ENCODE measurements at regions of chr5 and their contacts with region 1.

Region 1: DNA sequence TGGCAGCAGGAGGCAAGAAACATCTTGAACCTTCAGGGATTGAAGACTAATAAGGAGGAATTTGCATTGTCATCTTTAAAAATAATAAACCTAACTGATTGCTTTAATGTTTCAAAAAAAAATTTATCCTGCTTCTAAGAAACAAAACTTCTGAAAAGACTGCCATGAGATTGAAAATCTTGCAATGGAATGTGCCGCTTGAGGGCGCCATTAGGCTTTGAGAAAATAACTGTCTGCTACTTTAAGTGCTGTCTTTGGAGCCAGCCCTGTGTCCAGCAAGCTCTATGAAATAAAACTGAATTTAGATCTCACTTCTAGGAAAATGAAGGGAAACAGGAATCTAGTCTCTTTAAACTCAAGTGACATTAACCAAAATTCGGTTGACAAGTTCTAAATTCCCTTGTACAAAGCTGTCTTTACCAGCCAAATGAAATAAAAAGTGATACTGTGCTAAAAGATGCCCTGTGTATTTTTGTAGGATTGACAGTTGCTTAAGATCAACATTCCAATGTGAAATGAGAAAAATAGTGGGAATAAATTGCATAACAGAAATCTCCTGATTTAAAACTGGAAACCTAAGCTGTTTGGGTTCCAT is 79.4 kb downstream of the ESM1 start:
- DNase-seq: peak; percentile 79
- H3K4me3 Mint-ChIP-seq: no peak overlapping the region
- H3K27ac Mint-ChIP-seq: no peak overlapping the region
- H3K4me1 Mint-ChIP-seq: peaks cover 16% of the 10 kb centered on the region
- H3K27me3 Mint-ChIP-seq: peaks cover 39% of the 10 kb centered on the region

Region 2: GRCh38 chr5:54719384-54720283 is 186.4 kb before region 1 on chr5:
- CTCF ChIA-PET with region 1: no interaction called
- POLR2A ChIA-PET with region 1: no interaction called
- intact Hi-C with region 1: loop called (anchors 1 kb)
- DNase-seq: peak; percentile 67
- H3K4me3 Mint-ChIP-seq: no peak overlapping the region
- H3K27ac Mint-ChIP-seq: peak overlapping the region; percentile 42
- H3K4me1 Mint-ChIP-seq: peaks cover 34% of the 10 kb centered on the region
- H3K27me3 Mint-ChIP-seq: peaks cover under 1% of the 10 kb centered on the region

Region 3: DNA sequence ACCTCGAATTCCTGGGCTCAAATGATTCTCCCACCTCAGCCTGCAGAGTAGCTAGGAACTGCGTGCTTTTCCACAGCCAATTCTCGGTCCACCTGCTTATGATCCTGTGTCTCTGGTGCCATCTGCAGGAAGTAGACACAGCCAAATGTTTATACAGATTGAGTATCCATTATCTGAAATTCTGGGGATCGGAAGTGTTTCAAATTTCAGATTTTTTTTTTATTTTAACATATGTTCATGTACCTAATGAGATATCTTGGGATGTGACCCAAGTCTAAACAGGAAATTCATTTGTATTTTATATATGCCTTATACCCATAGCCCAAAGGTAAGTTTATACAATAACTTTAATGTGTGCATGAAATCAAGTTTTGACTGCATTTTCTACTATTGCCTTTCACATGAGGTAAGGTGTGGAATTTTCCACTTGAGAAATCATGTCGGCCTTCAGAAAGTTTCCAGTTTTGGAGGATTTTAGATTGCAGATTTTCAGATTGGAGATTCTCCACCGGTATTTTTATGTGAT is 10.2 kb before region 1 on chr5:
- CTCF ChIA-PET with region 1: interaction called, 13 read pairs
- POLR2A ChIA-PET with region 1: no interaction called
- intact Hi-C with region 1: no loop called
- DNase-seq: no peak
- H3K4me3 Mint-ChIP-seq: no peak overlapping the region
- H3K27ac Mint-ChIP-seq: no peak overlapping the region
- H3K4me1 Mint-ChIP-seq: peaks cover 5% of the 10 kb centered on the region
- H3K27me3 Mint-ChIP-seq: peaks cover 54% of the 10 kb centered on the region

Region 4: DNA sequence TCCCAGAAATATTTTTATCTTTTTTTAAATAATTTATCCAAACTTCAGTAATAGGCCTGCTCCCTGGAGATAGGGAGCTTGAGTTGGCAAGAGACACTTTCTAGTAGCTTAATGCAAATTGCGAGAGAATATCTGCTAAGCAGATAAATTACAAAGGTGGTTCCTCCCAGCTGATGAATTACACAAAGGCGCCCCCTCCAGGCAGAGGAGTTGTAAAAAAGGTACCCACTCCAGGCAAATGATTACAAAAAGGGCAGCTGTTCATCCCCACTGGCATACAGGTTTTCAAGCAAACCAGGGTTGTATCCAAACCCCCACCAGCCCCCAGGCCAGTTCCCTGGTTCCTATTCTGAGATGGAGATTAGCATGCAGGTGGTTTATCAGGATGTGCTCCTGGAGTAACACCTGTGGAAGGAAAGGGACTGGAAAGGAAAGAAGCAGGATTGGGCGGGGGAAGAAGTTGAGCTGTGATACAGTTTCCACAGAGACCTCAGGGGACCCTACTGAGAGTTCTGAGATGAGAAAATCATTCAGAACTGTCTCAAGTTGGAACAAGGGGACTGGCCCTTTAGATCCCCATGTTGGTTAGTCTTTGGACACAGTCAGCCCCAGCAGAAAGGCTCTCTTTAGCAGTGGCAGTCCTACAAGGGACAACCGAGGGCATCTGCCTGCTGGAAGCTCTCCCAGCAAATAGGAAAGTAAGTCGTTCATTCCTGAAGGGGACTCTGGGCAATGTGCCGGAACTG is 53.8 kb after region 1 on chr5:
- CTCF ChIA-PET with region 1: interaction called, 17 read pairs
- POLR2A ChIA-PET with region 1: no interaction called
- intact Hi-C with region 1: loop called (anchors 5 kb)
- DNase-seq: peak; percentile 60
- H3K4me3 Mint-ChIP-seq: no peak overlapping the region
- H3K27ac Mint-ChIP-seq: no peak overlapping the region
- H3K4me1 Mint-ChIP-seq: peaks cover 6% of the 10 kb centered on the region
- H3K27me3 Mint-ChIP-seq: peaks cover 2% of the 10 kb centered on the region

Region 5: DNA sequence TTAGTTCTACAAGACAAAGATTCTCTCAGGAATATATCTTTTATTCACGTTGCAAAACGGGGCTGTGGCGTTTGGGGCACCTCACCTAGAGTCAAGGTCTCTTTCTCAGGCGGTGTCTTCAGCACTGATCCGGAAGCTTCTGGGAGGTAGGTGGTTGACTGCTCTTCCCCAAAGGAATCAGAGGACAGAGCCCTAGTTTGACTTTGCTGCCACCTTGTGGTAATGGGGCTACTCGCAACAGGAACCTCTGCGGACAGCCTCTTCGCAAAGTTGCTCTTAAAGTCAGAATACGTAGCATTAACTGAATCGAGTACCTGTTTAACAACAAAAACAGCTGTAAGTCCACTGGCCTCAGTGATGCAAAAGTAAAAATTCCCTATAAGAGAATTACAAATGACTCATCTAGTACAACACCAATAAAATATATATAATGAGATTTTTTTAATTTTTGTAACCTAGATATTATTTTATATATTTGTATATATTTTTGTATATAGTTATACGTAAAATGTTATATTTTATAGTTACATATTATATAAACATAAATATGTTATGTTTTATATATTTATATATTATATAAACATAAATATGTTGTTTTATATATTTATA is 240.6 kb after region 1 on chr5:
- CTCF ChIA-PET with region 1: interaction called, 147 read pairs
- POLR2A ChIA-PET with region 1: no interaction called
- intact Hi-C with region 1: loop called (anchors 1 kb)
- DNase-seq: peak; percentile 89
- H3K4me3 Mint-ChIP-seq: no peak overlapping the region
- H3K27ac Mint-ChIP-seq: no peak overlapping the region
- H3K4me1 Mint-ChIP-seq: peaks cover 12% of the 10 kb centered on the region
- H3K27me3 Mint-ChIP-seq: peaks cover 1% of the 10 kb centered on the region

Region 6: DNA sequence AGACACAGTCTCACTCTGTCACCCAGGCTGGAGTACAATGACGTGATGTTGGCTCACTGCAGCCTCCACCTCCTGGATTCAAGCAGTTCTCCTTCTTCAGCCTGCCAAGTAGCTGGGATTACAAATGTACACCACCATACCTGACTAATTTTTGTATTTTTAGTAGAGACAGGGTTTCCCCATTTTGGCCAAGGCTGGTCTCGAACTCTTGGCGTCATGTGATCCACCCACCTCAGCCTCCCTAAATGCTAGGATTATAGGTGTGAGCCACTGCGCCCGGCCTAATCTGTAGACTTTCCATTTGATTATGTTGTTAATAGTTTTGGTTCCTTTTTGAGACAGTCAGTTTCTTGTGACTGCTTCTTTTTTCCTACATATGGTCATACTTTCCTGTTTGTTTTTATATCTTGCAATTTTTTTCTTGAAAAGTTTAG is 432.8 kb after region 1 on chr5:
- CTCF ChIA-PET with region 1: no interaction called
- POLR2A ChIA-PET with region 1: no interaction called
- intact Hi-C with region 1: no loop called
- DNase-seq: peak; percentile 81
- H3K4me3 Mint-ChIP-seq: no peak overlapping the region
- H3K27ac Mint-ChIP-seq: peak overlapping the region; percentile 54
- H3K4me1 Mint-ChIP-seq: peaks cover 21% of the 10 kb centered on the region
- H3K27me3 Mint-ChIP-seq: no peaks in the 10 kb centered on the region